IMR-90 (cell line): ENCODE measurements at regions of chr17 and their contacts with region 1.

Region 1: GRCh38 chr17:43483674-43484372 is at the start of gene DHX8:
- DNase-seq: peak; percentile 99
- ATAC-seq: peak; percentile 98
- H3K4me3 ChIP-seq: peak within 1 kb of the TSS; percentile 78
- H3K27ac ChIP-seq: peak within 1 kb of the TSS; percentile 86
- H3K4me1 ChIP-seq: peaks cover 8% of the 10 kb centered on the region
- H3K27me3 ChIP-seq: no peaks in the 10 kb centered on the region
- CTCF ChIP-seq: peak; percentile 100; the same call in 1 of the 2 replicates
- POLR2A ChIP-seq: peak; percentile 80
- RAD21 ChIP-seq: peak; percentile 100
- total RNA-seq, gene DHX8: 50.0 TPM in 2 replicates

Region 2: GRCh38 chr17:43104665-43105064 is 379.2 kb before region 1 on chr17:
- CTCF ChIA-PET with region 1: no interaction called
- POLR2A ChIA-PET with region 1: no interaction called
- dilution Hi-C with region 1: no loop called
- in situ Hi-C with region 1: no loop called
- intact Hi-C with region 1: no loop called
- DNase-seq: no peak
- ATAC-seq: no peak
- H3K4me3 ChIP-seq: no peak overlapping the region
- H3K27ac ChIP-seq: no peak overlapping the region
- H3K4me1 ChIP-seq: no peaks in the 10 kb centered on the region
- H3K27me3 ChIP-seq: no peaks in the 10 kb centered on the region
- CTCF ChIP-seq: no peak
- POLR2A ChIP-seq: no peak
- RAD21 ChIP-seq: no peak

Region 3: DNA sequence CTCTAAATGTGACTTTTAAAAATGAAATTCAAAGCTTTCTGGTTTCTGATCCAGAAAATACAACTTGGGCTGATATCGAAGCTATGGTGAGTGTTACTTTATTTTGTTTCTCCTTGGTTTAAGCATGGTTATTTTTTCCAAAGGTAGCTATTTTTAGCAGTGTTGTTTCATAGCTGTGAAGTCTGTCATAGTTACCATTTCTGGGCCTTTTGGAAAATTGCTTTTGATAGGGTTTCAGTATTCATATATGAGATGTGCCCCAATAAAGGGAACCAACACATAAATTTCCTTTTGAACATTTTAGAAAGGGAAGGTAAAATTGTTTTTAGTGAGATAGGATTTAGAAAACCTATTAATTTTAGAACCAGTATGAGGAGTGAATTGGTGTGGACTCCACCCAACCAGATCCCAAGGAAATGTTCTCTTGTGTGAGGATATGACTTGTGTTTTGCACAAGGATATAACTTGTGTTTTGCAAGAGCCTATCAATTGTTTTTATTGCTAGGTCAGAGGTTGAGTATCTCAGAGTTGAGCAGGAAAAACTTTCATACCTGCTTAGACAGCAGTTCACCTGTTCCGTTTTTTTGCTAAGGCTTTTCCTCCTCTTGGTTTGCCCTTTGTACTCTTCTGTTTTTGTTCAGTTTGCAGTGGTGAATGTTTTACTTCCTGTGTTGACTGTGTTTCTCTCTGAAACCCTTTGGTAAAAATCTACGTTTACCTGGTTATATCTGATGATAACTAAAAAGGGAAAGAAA is 307.8 kb before region 1 on chr17:
- CTCF ChIA-PET with region 1: no interaction called
- POLR2A ChIA-PET with region 1: no interaction called
- dilution Hi-C with region 1: no loop called
- in situ Hi-C with region 1: loop called (anchors 25 kb)
- intact Hi-C with region 1: no loop called
- DNase-seq: no peak
- ATAC-seq: no peak
- H3K4me3 ChIP-seq: no peak overlapping the region
- H3K27ac ChIP-seq: no peak overlapping the region; the same call in 1 of the 2 replicates
- H3K4me1 ChIP-seq: peaks cover 2% of the 10 kb centered on the region; the same call in 1 of the 2 replicates
- H3K27me3 ChIP-seq: no peaks in the 10 kb centered on the region
- CTCF ChIP-seq: no peak
- POLR2A ChIP-seq: no peak
- RAD21 ChIP-seq: no peak

Region 4: GRCh38 chr17:43367737-43368242 is 116.0 kb before region 1 on chr17:
- CTCF ChIA-PET with region 1: interaction called, 14 read pairs
- POLR2A ChIA-PET with region 1: interaction called, 23 read pairs
- dilution Hi-C with region 1: no loop called
- in situ Hi-C with region 1: no loop called
- intact Hi-C with region 1: no loop called
- DNase-seq: peak; percentile 97
- ATAC-seq: peak; percentile 59
- H3K4me3 ChIP-seq: peak overlapping the region; percentile 35; the same call in 1 of the 2 replicates
- H3K27ac ChIP-seq: peak overlapping the region; percentile 79
- H3K4me1 ChIP-seq: peaks cover 14% of the 10 kb centered on the region
- H3K27me3 ChIP-seq: no peaks in the 10 kb centered on the region
- CTCF ChIP-seq: no peak
- POLR2A ChIP-seq: peak; percentile 100
- RAD21 ChIP-seq: no peak

Region 5: GRCh38 chr17:43388359-43389045 is 95.3 kb before region 1 on chr17:
- CTCF ChIA-PET with region 1: interaction called, 47 read pairs
- POLR2A ChIA-PET with region 1: interaction called, 5 read pairs
- dilution Hi-C with region 1: no loop called
- in situ Hi-C with region 1: loop called (anchors 5 kb)
- intact Hi-C with region 1: no loop called
- DNase-seq: peak; percentile 92
- ATAC-seq: peak; percentile 89
- H3K4me3 ChIP-seq: peak overlapping the region; percentile 60
- H3K27ac ChIP-seq: peak overlapping the region; percentile 97
- H3K4me1 ChIP-seq: no peaks in the 10 kb centered on the region
- H3K27me3 ChIP-seq: no peaks in the 10 kb centered on the region; the same call in 1 of the 2 replicates
- CTCF ChIP-seq: no peak
- POLR2A ChIP-seq: peak; percentile 95
- RAD21 ChIP-seq: no peak

Region 6: DNA sequence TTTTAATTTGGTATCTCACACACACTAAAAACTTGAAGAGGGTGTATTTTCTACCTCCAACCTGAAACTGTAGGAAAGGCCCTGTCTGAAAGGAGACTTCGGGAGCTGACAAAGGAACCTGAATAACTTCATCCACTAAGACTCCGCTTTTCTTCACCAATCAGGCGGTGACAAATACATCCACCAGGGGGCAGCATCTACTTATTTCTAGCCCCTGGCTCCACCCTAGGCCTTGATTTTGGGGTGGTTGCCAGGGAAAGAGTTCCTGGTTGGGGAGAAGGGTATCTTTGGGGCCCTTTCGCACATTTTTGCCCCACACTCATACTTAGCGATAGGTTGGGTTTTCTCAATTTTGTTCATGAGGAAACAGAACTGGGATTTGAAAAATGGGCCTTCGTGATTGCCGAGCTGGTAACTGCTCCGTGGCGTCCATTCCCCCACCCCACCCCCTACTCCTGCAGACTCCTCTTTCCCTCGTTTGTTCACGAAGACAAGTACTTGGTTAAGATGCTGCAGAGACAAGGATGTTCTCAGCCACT is 89.8 kb before region 1 on chr17:
- CTCF ChIA-PET with region 1: interaction called, 47 read pairs
- POLR2A ChIA-PET with region 1: interaction called, 5 read pairs
- dilution Hi-C with region 1: no loop called
- in situ Hi-C with region 1: loop called (anchors 5 kb)
- intact Hi-C with region 1: loop called (anchors 1 kb)
- DNase-seq: peak; percentile 83
- ATAC-seq: peak; percentile 47
- H3K4me3 ChIP-seq: no peak overlapping the region
- H3K27ac ChIP-seq: peak overlapping the region; percentile 52
- H3K4me1 ChIP-seq: peaks cover 5% of the 10 kb centered on the region
- H3K27me3 ChIP-seq: no peaks in the 10 kb centered on the region
- CTCF ChIP-seq: peak; percentile 97
- POLR2A ChIP-seq: 0 out of 2 replicates have a peak, but pooled peaks have one; percentile 47
- RAD21 ChIP-seq: peak; percentile 99

Region 7: DNA sequence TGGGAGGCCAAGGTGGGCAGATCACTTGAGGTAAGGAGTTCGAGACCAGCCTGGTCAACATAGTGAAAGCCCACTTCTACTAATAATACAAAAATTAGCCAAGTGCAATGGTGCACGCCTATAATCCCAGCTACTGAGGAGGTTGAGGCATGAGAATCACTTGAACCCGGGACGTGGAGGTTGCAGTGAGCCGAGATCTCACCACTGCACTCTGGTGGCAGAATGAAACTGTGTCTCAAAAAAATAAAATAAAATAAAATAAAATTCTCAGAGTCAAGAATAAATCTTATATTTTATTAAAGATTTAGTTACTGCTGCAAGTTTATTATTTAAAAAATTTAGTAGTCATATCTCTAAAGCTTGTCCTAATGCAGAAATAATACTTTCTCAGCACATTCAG is 55.3 kb before region 1 on chr17:
- CTCF ChIA-PET with region 1: interaction called, 10 read pairs
- POLR2A ChIA-PET with region 1: no interaction called
- dilution Hi-C with region 1: no loop called
- in situ Hi-C with region 1: no loop called
- intact Hi-C with region 1: loop called (anchors 5 kb)
- DNase-seq: no peak
- ATAC-seq: no peak
- H3K4me3 ChIP-seq: no peak overlapping the region
- H3K27ac ChIP-seq: no peak overlapping the region
- H3K4me1 ChIP-seq: peaks cover 7% of the 10 kb centered on the region
- H3K27me3 ChIP-seq: peaks cover 7% of the 10 kb centered on the region
- CTCF ChIP-seq: peak; percentile 27
- POLR2A ChIP-seq: no peak
- RAD21 ChIP-seq: peak; percentile 29; the same call in 1 of the 2 replicates

Region 8: DNA sequence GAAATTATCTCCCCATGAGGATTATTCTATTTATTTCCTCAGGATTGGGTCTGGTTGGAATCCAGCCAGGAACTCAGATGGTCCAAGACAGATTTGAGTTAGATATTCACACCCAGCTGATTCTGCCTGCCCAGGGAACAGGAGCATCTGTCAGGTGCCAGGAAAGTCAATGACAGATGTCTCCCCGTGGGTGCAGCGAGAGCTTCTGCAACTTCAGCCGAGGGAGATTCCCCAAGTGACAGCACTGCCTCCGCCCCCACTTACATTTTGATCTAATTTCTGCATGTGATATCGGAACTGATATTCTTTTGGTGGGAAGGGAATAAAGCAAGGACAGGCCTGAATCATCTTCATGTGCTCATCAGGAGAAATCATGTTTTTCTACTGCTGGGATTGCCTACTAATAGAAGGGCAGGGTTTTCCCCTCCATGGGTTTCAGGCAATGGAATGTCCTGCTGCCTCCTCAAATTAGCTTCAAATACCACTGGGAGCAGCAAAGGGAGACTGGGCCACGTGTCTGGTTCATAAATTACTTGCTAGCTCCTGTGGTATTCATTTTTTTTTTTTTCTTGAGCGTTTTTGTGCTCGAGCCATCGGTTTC is 15.7 kb before region 1 on chr17:
- CTCF ChIA-PET with region 1: interaction called, 24 read pairs
- POLR2A ChIA-PET with region 1: interaction called, 5 read pairs
- dilution Hi-C with region 1: no loop called
- in situ Hi-C with region 1: no loop called
- intact Hi-C with region 1: no loop called
- DNase-seq: peak; percentile 85
- ATAC-seq: peak; percentile 74
- H3K4me3 ChIP-seq: no peak overlapping the region
- H3K27ac ChIP-seq: no peak overlapping the region
- H3K4me1 ChIP-seq: peaks cover 11% of the 10 kb centered on the region
- H3K27me3 ChIP-seq: no peaks in the 10 kb centered on the region
- CTCF ChIP-seq: no peak
- POLR2A ChIP-seq: no peak
- RAD21 ChIP-seq: no peak